ENCODE measurements at regions of chr9 and their contacts with region 1.

Region 1: DNA sequence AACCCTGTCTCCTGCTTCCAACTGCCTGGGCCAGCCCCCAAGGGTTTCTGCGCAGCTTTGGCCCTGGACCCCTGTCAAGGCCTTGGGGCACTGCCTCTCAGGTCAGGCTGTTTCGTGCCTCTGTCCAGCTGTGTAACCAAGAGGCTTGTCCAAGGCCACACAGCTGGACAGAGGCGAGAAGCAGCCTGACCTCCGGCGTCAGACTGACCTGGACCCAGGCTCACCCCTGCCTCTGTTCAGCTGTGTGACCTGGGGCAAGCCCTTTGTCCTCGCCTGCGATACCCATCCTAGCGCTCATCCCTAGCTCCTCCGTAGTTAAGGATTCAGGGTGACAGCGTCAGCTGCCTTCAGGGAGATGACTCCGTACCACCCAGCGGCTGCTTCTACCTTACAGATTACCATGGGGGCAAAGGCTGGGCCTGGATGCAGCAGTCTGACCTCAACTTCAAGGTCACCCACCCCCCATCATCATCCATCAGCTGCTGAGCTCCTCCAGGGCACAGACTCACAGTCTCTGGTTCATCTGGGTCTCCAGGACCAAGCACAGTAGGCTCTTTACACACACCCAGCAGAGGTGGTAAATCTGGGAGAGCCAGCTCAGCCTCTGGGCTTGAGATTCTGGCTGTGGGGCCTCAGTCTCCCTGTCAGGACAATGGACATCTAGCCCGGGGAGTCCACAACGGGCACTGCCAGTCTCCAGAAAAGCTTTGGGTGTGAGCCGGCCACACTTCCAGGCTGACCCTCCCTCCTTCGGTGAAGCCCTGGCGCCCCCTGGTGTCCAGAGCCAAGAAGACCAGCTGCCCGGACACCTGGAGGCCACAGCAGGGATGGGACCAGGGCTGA is 7.9 kb downstream of the AK1 start:
- DNase-seq: peak; percentile 95
- H3K27ac ChIP-seq: peak overlapping the region; percentile 87
- CTCF ChIP-seq: peak; percentile 98

Region 2: DNA sequence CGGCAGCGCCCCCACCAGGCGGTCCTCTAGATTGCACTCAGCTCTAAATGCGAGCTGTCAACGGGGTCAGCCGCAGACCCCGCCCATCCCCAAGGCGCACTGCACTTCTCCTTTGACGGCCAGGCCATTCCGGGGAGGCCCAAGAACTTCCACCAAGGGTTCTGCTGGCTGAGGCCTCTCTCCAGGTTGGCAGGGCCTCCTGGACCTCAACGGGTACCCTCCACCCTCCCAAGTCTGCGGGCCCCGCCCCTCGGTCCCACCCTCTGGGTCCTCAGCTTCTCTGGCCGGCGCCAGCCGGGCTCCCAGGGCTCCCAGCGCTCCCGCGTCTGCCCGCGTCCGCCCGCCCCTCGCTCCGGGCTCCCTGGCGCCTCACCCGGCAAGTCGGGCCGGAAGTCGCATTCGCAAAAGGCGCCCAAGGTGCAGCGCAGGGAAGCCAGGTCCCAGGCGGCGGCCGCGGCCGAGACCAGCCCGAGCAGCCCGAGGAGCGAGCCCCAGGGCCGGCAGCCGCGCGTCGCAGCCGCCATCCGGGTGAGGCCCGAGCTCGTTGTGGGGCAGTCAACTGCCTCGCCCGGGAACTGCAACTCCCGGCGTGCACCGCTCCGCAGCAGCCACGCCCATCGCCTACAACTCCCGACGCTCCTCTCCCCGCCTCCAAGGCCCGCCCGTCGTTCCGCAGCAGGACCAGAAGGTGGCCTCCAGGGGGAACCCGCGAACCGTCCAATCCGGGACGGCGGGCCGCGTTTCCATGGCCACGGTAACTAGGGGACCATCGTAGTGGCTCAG is 134.6 kb before region 1 on chr9 and contains the start of gene TOR2A:
- CTCF ChIA-PET with region 1: interaction called, 17 read pairs
- POLR2A ChIA-PET with region 1: interaction called, 3 read pairs
- DNase-seq: peak; percentile 99
- H3K27ac ChIP-seq: peak within 1 kb of the TSS; percentile 98
- CTCF ChIP-seq: peak; percentile 98

Region 3: GRCh38 chr9:127796225-127796813 is 73.2 kb before region 1 on chr9:
- CTCF ChIA-PET with region 1: interaction called, 12 read pairs
- POLR2A ChIA-PET with region 1: interaction called, 3 read pairs
- DNase-seq: no peak
- H3K27ac ChIP-seq: peak overlapping the region; percentile 72
- CTCF ChIP-seq: no peak

Region 4: DNA sequence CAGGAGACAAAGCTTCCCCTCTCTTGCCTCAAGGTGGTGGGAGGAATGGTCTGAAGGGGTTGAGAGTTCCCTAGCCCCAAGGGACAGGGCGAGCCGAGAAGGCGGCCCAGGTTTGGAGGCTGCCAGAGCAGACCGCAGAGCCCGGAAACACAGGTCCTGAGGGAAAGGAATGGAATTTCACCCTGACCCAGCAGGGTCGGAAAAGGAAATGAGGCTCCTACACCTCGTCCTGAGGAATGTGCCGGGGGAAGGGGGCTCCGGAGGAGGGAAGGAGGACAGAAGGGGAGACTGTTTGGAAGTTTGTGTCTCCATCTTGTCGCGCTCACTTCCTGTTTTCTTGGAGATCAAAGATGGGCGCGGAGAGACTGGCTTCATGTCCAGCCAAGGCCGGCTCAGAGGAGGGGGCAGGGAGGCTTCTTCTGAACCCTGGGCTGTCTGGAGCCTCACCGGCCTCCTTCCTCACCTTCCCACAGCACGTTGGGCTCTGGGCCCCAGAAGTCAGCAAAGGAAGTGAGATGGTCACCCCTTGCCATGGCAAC is 24.6 kb before region 1 on chr9:
- CTCF ChIA-PET with region 1: interaction called, 12 read pairs
- POLR2A ChIA-PET with region 1: no interaction called
- DNase-seq: no peak
- H3K27ac ChIP-seq: peak overlapping the region; percentile 27
- CTCF ChIP-seq: no peak

Region 5: GRCh38 chr9:127887792-127888191 is 18.3 kb after region 1 on chr9:
- CTCF ChIA-PET with region 1: interaction called, 11 read pairs
- POLR2A ChIA-PET with region 1: no interaction called
- DNase-seq: no peak
- H3K27ac ChIP-seq: peak overlapping the region; percentile 9
- CTCF ChIP-seq: no peak